Activated CD4-positive, alpha-beta memory T cell treated with anti-CD3 and anti-CD28 coated beads, Interleukin-2, amount 10 ng/mL, durations not matched to agents 7 days and 5 days (primary cell): ENCODE measurements at regions of chr1 and their contacts with region 1.

Region 1: GRCh38 chr1:25037174-25038074 is 107.3 kb upstream of the RUNX3 start:
- DNase-seq: peak; percentile 75
- H3K4me3 Mint-ChIP-seq: no peak overlapping the region
- H3K27ac Mint-ChIP-seq: peak overlapping the region; percentile 38
- H3K4me1 Mint-ChIP-seq: peaks cover 28% of the 10 kb centered on the region
- H3K27me3 Mint-ChIP-seq: peaks cover 20% of the 10 kb centered on the region

Region 2: DNA sequence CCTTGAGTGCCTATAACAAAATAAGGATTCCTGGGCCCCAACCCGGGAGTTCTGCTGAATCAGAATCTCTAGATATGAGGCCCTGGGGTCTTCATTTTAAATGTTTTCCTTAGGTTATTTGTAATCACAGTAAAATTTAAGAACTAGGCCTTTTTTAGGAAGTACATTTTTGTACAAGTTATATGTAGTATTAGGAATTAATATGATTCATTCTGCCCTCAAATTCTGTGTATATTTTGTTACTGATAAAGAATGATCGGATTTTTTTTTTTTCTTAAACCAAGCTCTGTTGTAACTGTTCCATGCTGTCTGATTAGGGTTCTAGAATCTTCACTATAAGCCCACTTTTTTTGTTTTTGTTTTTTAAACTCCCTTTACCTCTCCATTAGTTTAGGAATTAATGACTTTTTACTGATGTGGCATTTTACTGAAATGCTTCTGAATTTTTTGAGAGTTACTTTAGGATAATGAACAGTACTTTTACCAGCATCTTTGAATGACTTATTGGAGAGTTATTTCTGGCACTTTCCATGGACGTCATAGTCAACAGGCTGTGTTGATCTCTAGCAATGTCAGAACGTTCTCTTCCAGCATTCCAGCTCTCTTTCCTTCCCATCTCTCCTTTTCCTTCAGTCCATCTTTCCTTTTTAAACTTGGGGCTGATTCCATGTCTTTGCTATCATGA is 243.8 kb before region 1 on chr1:
- CTCF ChIA-PET with region 1: no interaction called
- POLR2A ChIA-PET with region 1: no interaction called
- DNase-seq: no peak
- H3K4me3 Mint-ChIP-seq: no peak overlapping the region
- H3K27ac Mint-ChIP-seq: no peak overlapping the region
- H3K4me1 Mint-ChIP-seq: no peaks in the 10 kb centered on the region
- H3K27me3 Mint-ChIP-seq: peaks cover 2% of the 10 kb centered on the region

Region 3: DNA sequence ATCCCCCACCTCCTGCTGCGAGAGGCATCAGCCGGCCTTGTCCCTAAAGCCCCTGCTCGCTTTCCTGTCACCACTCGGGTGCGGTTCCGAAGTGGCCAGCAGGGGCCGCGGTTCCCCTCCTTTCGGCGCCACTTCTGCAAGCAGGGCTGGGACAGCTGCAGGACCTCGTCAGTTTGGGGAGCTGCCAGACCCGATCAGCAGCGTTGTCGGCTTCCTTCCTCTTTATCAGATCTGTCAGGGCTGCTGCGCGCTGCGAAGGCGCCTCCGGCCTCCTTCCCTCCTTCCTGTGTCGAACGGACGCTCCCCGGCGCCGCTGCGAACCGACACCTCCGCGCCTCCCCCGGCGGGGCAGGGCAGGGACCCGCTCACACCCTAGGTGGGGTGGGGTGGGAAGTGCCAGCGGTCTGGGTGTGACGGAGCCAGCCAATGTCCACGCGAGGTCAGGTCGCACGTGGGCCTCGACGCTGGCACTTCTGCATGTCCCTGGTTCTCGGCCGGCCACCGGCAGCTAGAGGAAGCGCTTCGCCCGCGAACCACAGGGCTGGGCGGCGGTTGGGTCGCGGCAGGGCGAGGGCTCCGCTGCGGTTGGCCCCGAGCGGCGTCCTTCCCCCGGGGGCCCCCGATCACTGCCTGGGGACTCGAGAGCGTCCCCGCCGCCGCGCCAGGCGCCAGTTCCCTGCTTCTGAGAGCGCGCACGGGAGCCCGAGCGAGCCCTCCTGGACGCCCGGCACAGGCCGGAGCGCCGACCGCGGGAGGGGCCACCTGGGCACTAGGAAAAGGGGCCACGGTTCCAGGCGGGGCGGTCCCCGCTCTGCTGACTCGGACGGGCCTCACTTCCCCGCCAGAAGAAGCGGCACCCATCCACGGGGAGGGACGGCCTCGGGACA is 189.2 kb before region 1 on chr1:
- CTCF ChIA-PET with region 1: interaction called, 31 read pairs
- POLR2A ChIA-PET with region 1: interaction called, 7 read pairs
- DNase-seq: peak; percentile 91
- H3K4me3 Mint-ChIP-seq: peak overlapping the region; percentile 61
- H3K27ac Mint-ChIP-seq: peak overlapping the region; percentile 52
- H3K4me1 Mint-ChIP-seq: peaks cover 26% of the 10 kb centered on the region
- H3K27me3 Mint-ChIP-seq: peaks cover 26% of the 10 kb centered on the region

Region 4: DNA sequence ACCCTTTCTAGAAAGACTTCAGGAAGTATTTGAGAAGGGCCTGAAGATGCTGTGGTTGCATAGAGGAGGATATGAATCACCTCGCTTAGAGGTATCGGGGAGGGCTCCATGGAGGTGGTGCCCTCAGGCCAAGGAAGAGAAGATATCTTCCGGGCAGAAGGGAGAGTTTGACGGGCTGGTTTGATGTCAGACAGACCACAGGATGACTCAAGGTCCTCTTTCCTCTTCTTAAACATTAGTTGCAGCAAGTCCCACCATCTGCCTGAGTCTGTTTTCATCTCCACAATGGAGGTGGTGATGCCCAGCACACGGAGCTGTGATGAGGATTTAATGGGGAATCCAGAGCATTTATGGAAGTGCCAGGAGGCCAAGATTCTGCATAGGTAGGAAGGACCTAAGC is 82.3 kb before region 1 on chr1:
- CTCF ChIA-PET with region 1: interaction called, 42 read pairs
- POLR2A ChIA-PET with region 1: interaction called, 19 read pairs
- DNase-seq: peak; percentile 88
- H3K4me3 Mint-ChIP-seq: peak overlapping the region; percentile 75
- H3K27ac Mint-ChIP-seq: peak overlapping the region; percentile 96
- H3K4me1 Mint-ChIP-seq: peaks cover 96% of the 10 kb centered on the region
- H3K27me3 Mint-ChIP-seq: no peaks in the 10 kb centered on the region

Region 5: DNA sequence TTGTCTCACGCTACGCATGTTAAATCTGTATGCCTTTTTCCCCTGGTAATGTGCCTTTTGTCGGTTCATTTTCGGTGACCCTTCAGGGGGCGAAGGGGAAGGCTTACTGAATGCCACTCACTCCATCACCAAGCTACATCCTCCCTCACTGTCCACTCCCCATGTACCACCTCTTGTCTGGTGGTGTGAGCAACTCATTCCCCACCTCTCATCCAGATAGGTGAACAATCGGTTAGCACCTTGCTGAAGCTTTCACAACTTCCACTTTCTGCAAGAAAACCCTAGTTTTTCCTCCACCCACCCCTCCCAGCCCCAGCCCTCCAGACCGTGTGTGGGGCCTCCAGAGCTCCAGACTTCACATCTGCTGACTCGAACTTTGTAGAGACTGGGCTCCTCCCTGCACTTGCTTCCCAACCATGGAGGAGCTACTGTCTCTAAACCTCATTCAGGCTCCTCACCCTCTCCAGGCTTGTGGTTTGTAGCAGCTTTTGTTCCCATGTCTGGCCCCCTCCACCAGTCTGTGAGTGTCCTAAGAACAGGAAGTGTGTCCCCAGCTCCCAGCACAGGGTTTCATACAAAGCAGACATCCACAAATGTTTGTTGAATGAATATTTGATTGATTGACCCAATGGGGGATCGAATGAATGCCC is 58.9 kb before region 1 on chr1:
- CTCF ChIA-PET with region 1: interaction called, 14 read pairs
- POLR2A ChIA-PET with region 1: interaction called, 3 read pairs
- DNase-seq: no peak
- H3K4me3 Mint-ChIP-seq: no peak overlapping the region
- H3K27ac Mint-ChIP-seq: no peak overlapping the region
- H3K4me1 Mint-ChIP-seq: peaks cover 67% of the 10 kb centered on the region
- H3K27me3 Mint-ChIP-seq: peaks cover 15% of the 10 kb centered on the region

Region 6: DNA sequence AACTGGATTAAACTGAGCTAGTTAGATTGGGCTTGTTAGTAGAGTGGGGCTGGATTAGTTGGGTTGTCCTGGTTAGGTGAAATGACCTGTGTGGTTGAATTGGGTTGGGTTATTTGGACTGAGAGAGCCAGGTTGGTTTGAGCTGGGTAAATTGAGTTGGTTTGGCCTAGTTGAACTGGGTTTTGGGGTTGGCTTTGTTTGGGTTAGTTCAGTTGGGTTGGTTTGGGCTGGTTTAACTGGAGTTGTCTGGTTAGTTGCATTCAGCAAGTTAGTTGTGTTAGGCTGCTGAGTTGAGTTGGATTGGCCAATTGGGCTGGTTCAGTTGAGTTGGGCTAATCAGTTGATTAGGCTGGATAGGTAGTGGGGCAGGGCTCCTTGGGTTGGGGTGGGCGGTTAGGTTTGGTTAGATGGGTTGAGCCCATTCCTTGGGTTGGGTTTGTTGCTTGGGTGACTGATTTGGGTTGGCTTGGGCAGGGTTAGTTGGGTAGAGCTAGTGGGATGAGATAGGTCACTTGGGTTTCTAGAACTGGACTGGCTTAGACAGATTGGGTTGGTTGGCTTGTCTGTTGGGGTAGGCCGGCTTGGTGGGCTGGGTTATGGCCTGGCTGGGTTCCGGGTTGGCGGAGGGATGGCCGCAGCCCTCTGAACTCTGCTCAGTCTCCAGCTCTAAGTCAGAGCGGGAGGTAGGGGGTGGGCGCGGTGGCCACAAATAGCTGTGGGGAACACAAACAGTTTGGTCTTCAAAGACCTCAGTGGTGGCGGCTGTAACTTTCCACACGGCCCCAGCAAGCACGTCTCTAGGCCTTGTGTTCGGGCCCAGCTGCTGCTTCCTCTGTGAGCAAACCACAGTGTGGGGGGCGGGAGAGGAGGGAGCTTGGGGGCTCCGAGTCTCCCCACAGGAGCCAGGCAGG is 40.2 kb before region 1 on chr1:
- CTCF ChIA-PET with region 1: interaction called, 31 read pairs
- POLR2A ChIA-PET with region 1: interaction called, 6 read pairs
- DNase-seq: no peak
- H3K4me3 Mint-ChIP-seq: no peak overlapping the region
- H3K27ac Mint-ChIP-seq: peak overlapping the region; percentile 38
- H3K4me1 Mint-ChIP-seq: peaks cover 85% of the 10 kb centered on the region
- H3K27me3 Mint-ChIP-seq: no peaks in the 10 kb centered on the region

Region 7: DNA sequence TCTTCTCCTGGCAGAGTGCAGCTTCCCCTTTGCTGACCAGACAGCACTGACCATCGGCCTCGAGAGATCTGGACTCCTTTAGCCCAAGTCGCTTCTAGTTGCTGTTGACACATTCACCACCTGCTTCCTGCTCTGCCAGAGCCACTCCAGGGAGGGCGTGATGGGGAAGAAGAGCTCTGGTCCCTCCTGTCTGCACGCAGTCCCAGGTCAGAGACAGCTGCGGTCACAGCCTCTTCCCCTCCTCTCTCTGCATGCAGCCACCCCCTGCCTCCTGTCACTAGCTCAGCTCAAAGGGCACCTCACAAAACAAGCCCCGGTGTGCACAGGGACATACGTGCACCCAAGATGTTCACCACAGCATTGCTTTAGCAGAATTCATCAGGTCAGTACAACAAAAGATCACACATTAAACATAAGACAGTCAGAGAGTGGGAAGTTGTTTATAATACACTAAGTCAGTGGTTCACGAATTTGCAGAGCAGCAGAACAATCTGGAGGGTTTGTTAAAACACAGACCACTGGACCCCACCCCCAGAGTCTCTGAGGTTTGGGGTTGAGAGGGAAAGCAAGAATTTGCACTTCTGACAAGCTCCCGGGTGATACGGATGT is 62.0 kb after region 1 on chr1:
- CTCF ChIA-PET with region 1: interaction called, 21 read pairs
- POLR2A ChIA-PET with region 1: interaction called, 4 read pairs
- DNase-seq: peak; percentile 54
- H3K4me3 Mint-ChIP-seq: no peak overlapping the region
- H3K27ac Mint-ChIP-seq: peak overlapping the region; percentile 71
- H3K4me1 Mint-ChIP-seq: peaks cover 73% of the 10 kb centered on the region
- H3K27me3 Mint-ChIP-seq: peaks cover 24% of the 10 kb centered on the region